Gastrocnemius medialis (tissue), 4 donors: ENCODE measurements at regions of chr19 and their contacts with region 1.

Region 1: GRCh38 chr19:28710278-28710677 is 502.7 kb downstream of the UQCRFS1 start:
- DNase-seq: no peak
- ATAC-seq: no peak
- H3K4me3 ChIP-seq: no peak overlapping the region
- H3K27ac ChIP-seq: no peak overlapping the region
- H3K4me1 ChIP-seq: no peaks in the 10 kb centered on the region
- H3K27me3 ChIP-seq: no peaks in the 10 kb centered on the region
- CTCF ChIP-seq: peak; percentile 45 to 75 (median 65)
- POLR2A ChIP-seq: no peak

Region 2: GRCh38 chr19:27974082-27974513 is 736.2 kb before region 1 on chr19:
- in situ Hi-C with region 1: loop called in 1 of 4 experiments (anchors 25 kb)
- intact Hi-C with region 1: no loop called
- DNase-seq: no peak
- ATAC-seq: no peak
- H3K4me3 ChIP-seq: no peak overlapping the region
- H3K27ac ChIP-seq: no peak overlapping the region
- H3K4me1 ChIP-seq: no peaks in the 10 kb centered on the region
- H3K27me3 ChIP-seq: no peaks in the 10 kb centered on the region
- CTCF ChIP-seq: no peak
- POLR2A ChIP-seq: no peak